BJ (cell line): ENCODE measurements at regions of chr5 and their contacts with region 1.

Region 1: DNA sequence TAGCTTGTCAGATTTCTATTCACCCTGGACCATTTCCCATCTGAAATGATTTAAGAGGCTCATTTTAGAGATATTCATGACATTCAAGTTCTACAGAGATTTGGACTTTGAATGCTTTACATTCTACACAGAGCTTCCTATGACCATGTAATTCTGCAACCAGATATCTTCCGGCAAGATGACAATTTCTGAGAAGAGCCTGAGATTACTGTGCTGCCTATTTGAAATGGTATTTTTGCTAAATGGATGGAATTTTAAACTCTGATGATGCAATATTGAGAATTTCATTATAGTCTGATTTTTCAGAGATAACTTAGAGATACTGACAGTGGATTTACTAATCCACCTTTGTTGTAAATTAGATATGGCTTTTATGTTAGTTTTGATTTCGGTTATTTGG is 16.0 kb upstream of the ACOT12 start:
- DNase-seq: no peak
- H3K4me3 ChIP-seq: no peak overlapping the region
- H3K27me3 ChIP-seq: no peaks in the 10 kb centered on the region
- CTCF ChIP-seq: no peak

Region 2: DNA sequence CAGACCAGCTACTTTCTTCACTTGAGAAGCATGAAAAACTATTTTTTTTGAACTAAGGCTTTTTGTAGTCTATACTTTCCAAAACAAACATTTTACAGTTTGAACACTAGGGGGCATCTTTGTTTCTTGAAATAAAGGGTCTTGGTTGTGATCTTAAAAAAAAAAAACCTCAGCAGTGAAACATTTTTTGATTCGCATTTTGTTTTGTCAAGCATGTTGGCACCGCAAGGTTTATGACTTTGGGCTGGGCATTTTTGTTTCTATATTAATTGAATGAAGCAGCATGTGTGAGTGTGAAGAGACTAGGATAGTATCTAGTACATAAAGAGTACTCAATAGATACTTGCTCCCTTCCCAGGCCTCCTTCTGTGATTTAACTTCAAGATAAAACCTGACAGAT is 15.7 kb after region 1 on chr5:
- CTCF ChIA-PET with region 1: interaction called, 10 read pairs
- POLR2A ChIA-PET with region 1: no interaction called
- DNase-seq: no peak
- H3K4me3 ChIP-seq: no peak overlapping the region
- H3K27me3 ChIP-seq: no peaks in the 10 kb centered on the region
- CTCF ChIP-seq: peak; percentile 53